Activated T-helper 2 cell treated with anti-CD3 and anti-CD28 coated beads, Interferon-gamma antibody, Interleukin-2, Interleukin-4, amounts not matched to agents 10 μg/mL and 5 μg/mL and 100 μg/mL, durations not matched to agents 14 hours and 24 hours and 36 hours (primary cell): ENCODE measurements at regions of chr4 and their contacts with region 1.

Region 1: DNA sequence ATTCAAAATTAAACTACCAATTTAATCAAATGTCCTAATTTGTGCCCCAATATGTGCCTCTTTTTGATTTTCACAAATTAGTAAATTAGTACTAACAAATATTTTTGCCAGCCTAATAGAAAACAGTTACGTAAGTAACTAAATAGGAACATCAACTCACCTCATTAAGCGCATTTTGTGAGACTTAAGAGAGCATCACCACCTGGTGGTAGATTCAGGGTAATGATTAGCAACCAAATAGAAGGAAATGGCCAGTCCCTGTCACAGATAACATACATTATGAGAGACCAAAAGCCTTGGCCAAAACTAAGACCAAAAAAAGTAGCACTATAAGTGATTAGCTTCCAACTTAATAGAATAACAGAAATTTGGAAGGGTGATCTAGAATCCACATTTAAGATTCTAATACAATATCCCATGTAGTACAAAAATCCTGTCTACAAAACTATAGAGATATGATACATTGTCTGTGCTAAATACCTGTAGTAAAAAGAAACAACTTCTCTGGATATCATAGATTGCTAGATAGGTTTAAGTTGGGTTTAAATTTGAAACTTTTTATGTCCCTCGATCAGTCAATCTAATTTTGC is 46.7 kb downstream of the C4orf46 start:
- DNase-seq: no peak
- H3K4me3 Mint-ChIP-seq: no peak overlapping the region
- H3K27ac Mint-ChIP-seq: no peak overlapping the region
- H3K4me1 Mint-ChIP-seq: no peaks in the 10 kb centered on the region
- H3K27me3 Mint-ChIP-seq: peaks cover 5% of the 10 kb centered on the region

Region 2: DNA sequence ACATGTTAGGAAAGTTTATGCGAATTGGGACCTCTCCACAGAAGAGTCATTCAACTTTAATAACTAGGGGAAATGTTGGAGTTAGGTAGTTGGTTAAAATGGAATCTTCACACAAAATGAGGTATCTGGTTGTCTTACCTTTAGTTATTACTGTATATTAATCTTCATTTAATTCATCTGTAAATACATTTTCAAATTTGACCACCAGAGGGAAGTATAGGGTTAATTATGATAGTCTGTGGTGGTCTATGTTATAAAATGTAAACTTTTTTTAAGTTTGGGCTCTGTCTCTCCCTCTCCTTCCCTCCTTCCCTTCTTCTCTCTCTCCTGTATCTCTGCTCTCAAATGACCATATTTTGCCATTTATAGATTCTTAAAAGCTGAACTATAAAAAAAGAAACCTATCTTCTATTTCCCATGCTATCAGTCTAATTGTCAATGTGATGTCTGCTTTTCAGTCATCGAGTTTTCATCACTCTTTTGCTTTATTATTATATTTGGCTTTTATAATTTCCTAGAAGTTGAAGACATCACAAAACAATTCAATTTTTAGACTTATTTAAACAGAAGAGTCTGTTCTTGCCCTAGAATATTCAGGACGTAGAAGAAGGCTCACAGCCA is 364.9 kb before region 1 on chr4:
- intact Hi-C with region 1: loop called (anchors 2 kb)
- DNase-seq: no peak
- H3K4me3 Mint-ChIP-seq: no peak overlapping the region
- H3K27ac Mint-ChIP-seq: no peak overlapping the region
- H3K4me1 Mint-ChIP-seq: no peaks in the 10 kb centered on the region
- H3K27me3 Mint-ChIP-seq: no peaks in the 10 kb centered on the region

Region 3: GRCh38 chr4:158496030-158496741 is 128.8 kb before region 1 on chr4:
- intact Hi-C with region 1: loop called (anchors 1 kb)
- DNase-seq: no peak
- H3K4me3 Mint-ChIP-seq: no peak overlapping the region
- H3K27ac Mint-ChIP-seq: no peak overlapping the region
- H3K4me1 Mint-ChIP-seq: no peaks in the 10 kb centered on the region
- H3K27me3 Mint-ChIP-seq: peaks cover 2% of the 10 kb centered on the region

Region 4: GRCh38 chr4:158722917-158723793 is 98.2 kb after region 1 on chr4 and contains the start of gene PPID:
- intact Hi-C with region 1: no loop called
- DNase-seq: peak; percentile 77
- H3K4me3 Mint-ChIP-seq: peak within 1 kb of the TSS; percentile 95
- H3K27ac Mint-ChIP-seq: peak within 1 kb of the TSS; percentile 98
- H3K4me1 Mint-ChIP-seq: peaks cover 50% of the 10 kb centered on the region
- H3K27me3 Mint-ChIP-seq: peaks cover 2% of the 10 kb centered on the region
- total RNA-seq, gene PPID: 56.8 and 58.5 TPM in 2 replicates